CD8-positive, alpha-beta T cell (primary cell): ENCODE measurements at regions of chr18 and their contacts with region 1.

Region 1: GRCh38 chr18:8608795-8609658 is at the start of gene RAB12:
- DNase-seq: peak; percentile 72 to 93 (median 88)
- ATAC-seq: peak; percentile 92
- H3K4me3 ChIP-seq: peak within 1 kb of the TSS; percentile 64 to 70
- H3K4me3 Mint-ChIP-seq: peak within 1 kb of the TSS; percentile 90
- H3K27ac ChIP-seq: peak within 1 kb of the TSS; percentile 53 to 70
- H3K27ac Mint-ChIP-seq: peak within 1 kb of the TSS; percentile 90
- H3K4me1 ChIP-seq: peaks cover 42% of the 10 kb centered on the region
- H3K4me1 Mint-ChIP-seq: peaks cover 50% of the 10 kb centered on the region
- H3K27me3 ChIP-seq: no peaks in the 10 kb centered on the region
- H3K27me3 Mint-ChIP-seq: no peaks in the 10 kb centered on the region
- CTCF ChIP-seq: peak; percentile 70
- total RNA-seq, gene RAB12: 20.2 to 20.9 TPM

Region 2: DNA sequence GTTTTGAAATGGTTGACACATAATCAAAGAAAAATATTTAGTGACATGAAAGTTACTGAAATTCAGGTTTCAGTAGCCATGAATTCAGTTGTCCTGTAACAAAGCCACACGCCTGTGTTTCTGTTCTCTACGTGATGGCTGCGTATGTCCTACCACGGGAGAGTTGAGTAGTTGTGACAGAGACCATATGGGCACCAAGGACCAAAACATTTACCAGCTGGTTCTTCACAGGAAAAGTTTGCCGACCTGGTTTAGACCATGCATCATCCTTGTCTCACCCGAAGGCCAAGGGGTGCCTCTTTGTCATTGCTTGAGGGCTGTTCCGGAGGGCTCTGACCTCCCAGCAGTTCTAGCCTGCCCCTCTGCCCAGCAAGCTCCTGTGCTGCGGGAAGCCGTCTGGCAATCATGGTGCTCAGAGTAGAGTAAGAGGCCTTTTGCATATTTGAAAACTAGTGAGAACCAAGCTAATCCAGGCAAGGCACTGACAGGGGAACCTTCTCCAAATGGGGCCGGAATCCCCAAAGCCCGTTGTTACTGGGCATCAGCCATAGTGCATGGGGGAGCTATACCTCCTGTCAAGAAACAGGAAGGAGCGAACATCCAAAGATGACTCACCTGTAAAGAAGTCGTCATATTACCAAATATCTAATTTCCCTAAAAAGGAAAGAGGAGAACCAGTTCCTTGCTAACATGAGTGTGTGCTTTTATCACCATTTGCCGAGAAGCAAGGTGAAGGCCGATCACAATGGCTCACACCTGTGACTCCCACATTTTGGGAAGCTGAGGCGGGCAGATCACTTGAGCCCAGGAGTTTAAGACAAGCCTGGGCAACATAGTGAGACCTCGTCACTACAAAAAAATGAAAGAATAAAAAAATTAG is 92.4 kb before region 1 on chr18:
- CTCF ChIA-PET with region 1: no interaction called
- POLR2A ChIA-PET with region 1: no interaction called
- intact Hi-C with region 1: no loop called
- DNase-seq: no peak
- ATAC-seq: no peak
- H3K4me3 ChIP-seq: no peak overlapping the region
- H3K4me3 Mint-ChIP-seq: no peak overlapping the region
- H3K27ac ChIP-seq: no peak overlapping the region
- H3K27ac Mint-ChIP-seq: no peak overlapping the region
- H3K4me1 ChIP-seq: no peaks in the 10 kb centered on the region
- H3K4me1 Mint-ChIP-seq: no peaks in the 10 kb centered on the region
- H3K27me3 ChIP-seq: no peaks in the 10 kb centered on the region
- H3K27me3 Mint-ChIP-seq: no peaks in the 10 kb centered on the region
- CTCF ChIP-seq: no peak

Region 3: GRCh38 chr18:8747440-8747937 is 138.5 kb after region 1 on chr18:
- CTCF ChIA-PET with region 1: no interaction called
- POLR2A ChIA-PET with region 1: no interaction called
- intact Hi-C with region 1: loop called in 1 of 2 experiments (anchors 5 kb)
- DNase-seq: no peak
- ATAC-seq: no peak
- H3K4me3 ChIP-seq: no peak overlapping the region
- H3K4me3 Mint-ChIP-seq: no peak overlapping the region
- H3K27ac ChIP-seq: no peak overlapping the region
- H3K27ac Mint-ChIP-seq: no peak overlapping the region
- H3K4me1 ChIP-seq: peaks cover 31% of the 10 kb centered on the region
- H3K4me1 Mint-ChIP-seq: peaks cover 36% of the 10 kb centered on the region
- H3K27me3 ChIP-seq: no peaks in the 10 kb centered on the region
- H3K27me3 Mint-ChIP-seq: no peaks in the 10 kb centered on the region
- CTCF ChIP-seq: no peak

Region 4: GRCh38 chr18:8771930-8772329 is 162.9 kb after region 1 on chr18:
- CTCF ChIA-PET with region 1: no interaction called
- POLR2A ChIA-PET with region 1: no interaction called
- intact Hi-C with region 1: no loop called
- DNase-seq: no peak
- ATAC-seq: no peak
- H3K4me3 ChIP-seq: no peak overlapping the region
- H3K4me3 Mint-ChIP-seq: no peak overlapping the region
- H3K27ac ChIP-seq: no peak overlapping the region
- H3K27ac Mint-ChIP-seq: no peak overlapping the region
- H3K4me1 ChIP-seq: no peaks in the 10 kb centered on the region
- H3K4me1 Mint-ChIP-seq: no peaks in the 10 kb centered on the region
- H3K27me3 ChIP-seq: no peaks in the 10 kb centered on the region
- H3K27me3 Mint-ChIP-seq: no peaks in the 10 kb centered on the region
- CTCF ChIP-seq: no peak

Region 5: DNA sequence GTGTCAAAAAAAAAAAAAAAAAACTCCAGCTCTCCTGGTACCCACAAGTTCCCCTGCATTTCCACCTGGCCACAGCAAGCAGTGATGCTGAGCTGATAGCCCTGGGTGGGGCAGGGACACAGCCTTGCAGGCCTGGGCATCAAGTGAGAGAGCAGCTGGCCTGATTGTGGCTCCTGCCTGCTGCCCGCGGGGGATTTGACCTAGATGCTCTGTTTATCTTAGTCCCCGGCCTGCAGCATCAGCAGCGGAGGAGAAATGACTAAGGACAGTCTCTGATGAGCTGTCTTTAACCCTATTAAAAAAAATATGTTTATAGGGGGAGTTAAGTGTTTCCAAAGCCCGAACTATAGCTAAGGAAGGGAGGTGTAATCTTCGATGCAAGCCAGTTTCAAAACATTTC is 199.0 kb after region 1 on chr18:
- CTCF ChIA-PET with region 1: no interaction called
- POLR2A ChIA-PET with region 1: no interaction called
- intact Hi-C with region 1: no loop called
- DNase-seq: no peak
- ATAC-seq: no peak
- H3K4me3 ChIP-seq: no peak overlapping the region
- H3K4me3 Mint-ChIP-seq: no peak overlapping the region
- H3K27ac ChIP-seq: no peak overlapping the region
- H3K27ac Mint-ChIP-seq: no peak overlapping the region
- H3K4me1 ChIP-seq: peaks cover 14% of the 10 kb centered on the region
- H3K4me1 Mint-ChIP-seq: peaks cover 19% of the 10 kb centered on the region
- H3K27me3 ChIP-seq: no peaks in the 10 kb centered on the region
- H3K27me3 Mint-ChIP-seq: peaks cover 2% of the 10 kb centered on the region
- CTCF ChIP-seq: no peak

Region 6: GRCh38 chr18:10525371-10526210 is 1916.6 kb after region 1 on chr18 and contains the start of gene NAPG:
- CTCF ChIA-PET with region 1: no interaction called
- POLR2A ChIA-PET with region 1: no interaction called
- intact Hi-C with region 1: loop called (anchors 5 to 10 kb)
- DNase-seq: peak; percentile 78 to 97 (median 88)
- ATAC-seq: peak; percentile 86
- H3K4me3 ChIP-seq: peak within 1 kb of the TSS; percentile 90 to 98
- H3K4me3 Mint-ChIP-seq: peak within 1 kb of the TSS; percentile 97
- H3K27ac ChIP-seq: peak within 1 kb of the TSS; percentile 75 to 87
- H3K27ac Mint-ChIP-seq: peak within 1 kb of the TSS; percentile 96
- H3K4me1 ChIP-seq: peaks cover 31% of the 10 kb centered on the region
- H3K4me1 Mint-ChIP-seq: peaks cover 50% of the 10 kb centered on the region
- H3K27me3 ChIP-seq: no peaks in the 10 kb centered on the region
- H3K27me3 Mint-ChIP-seq: no peaks in the 10 kb centered on the region
- CTCF ChIP-seq: no peak
- total RNA-seq, gene NAPG: 33.2 to 35.8 TPM